Gastrocnemius medialis (tissue), 4 donors: ENCODE measurements at regions of chr2 and their contacts with region 1.

Region 1: DNA sequence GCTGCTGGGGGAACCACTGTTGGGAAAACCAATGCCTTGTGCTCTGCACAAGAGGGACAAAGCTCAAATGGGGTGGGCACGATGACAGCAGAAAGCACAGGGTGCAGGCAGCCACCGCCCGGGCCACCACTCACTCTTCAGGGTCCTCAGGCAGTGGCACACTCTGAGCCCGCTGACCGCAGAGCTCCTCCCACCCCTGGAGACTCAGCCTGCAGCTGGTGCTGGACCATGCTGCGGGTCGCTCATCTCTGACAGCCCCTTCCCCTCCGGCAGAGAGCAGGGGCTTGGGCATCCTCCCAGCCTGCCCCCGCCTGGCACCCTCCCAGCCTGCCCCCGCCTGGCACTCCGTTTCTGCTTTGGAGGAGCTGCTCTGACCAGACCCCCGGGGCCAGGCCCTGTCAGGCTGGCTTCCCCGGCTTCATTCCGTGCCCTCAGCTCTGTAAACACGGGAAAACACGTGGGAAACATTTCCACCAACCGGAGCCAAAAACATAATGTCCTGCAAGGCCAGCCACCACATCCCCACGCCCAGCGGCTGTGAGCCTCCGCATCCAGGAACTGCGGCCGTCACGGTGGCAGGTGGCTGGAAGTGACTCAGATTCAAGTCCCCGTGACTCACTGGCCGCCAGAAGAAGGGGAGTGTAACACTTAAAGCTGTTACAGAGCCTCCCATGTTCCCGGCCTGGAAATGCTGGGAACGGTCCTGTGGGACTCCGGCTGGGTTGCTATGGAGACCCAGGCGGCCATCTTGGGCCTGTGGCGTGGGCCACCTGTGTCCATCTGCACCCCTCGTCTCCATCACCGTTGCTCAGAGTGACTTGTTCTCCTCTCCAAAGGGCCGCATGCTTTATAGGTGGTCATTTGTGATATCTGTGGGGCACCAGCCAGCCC is 6.8 kb upstream of the SNED1 start:
- DNase-seq: peak; percentile 97 to 98
- ATAC-seq: peak; percentile 88 to 89
- H3K4me3 ChIP-seq: peak overlapping the region; percentile 27 to 39 (median 34)
- H3K27ac ChIP-seq: peak overlapping the region; percentile 92 to 98 (median 95)
- H3K4me1 ChIP-seq: peaks cover 52 to 55% of the 10 kb centered on the region in 2 donors
- H3K27me3 ChIP-seq: no peaks in the 10 kb centered on the region
- CTCF ChIP-seq: no peak
- POLR2A ChIP-seq: peak; percentile 24 to 67

Region 2: DNA sequence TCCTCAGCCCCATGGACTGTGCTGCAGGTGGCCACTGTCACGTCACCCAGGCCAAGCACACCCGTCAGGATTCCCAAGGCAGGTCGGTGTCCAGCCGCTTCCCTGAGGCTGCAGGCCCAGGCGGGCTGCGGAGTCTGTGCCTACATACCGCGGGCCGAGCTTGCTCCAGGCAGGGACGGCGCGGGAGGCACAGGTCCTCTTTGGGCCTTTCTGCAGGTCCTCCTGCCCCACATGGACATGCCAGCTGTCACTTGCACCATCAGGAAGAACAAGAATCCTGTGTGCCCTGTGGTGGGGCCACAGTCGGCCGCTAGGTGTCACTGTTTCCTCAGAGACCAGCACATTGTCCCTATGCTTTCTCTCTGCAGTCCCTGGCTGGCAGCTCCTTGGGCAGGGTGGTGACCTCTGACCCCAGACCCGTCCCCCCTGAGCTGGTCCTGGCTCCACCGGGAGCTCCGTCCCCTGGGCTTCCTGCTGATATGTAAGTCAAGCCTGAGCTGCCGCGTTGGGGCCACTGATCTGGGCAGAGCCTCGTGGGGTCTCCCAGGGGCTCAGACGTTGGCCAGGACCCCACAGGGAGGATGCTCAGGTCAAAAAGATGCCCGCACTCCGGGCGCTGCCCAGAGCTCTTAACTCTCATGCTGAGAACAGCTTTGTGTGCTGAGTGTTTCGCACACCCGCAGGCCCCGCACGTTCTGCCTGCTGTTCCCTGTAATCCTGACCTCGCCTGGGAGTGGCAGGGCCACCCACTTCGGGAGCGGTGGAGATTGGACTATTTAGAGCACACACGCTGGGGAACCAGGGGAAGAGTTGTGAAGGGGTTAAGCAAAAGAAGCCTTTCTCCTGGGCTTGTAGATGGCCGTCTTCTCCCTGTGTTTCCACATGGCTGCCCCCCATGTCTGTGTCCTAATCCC is 140.3 kb before region 1 on chr2:
- in situ Hi-C with region 1: no loop called
- intact Hi-C with region 1: loop called (anchors 1 kb)
- DNase-seq: peak; percentile 56 to 80
- ATAC-seq: peak; percentile 93 to 99
- H3K4me3 ChIP-seq: no peak overlapping the region
- H3K27ac ChIP-seq: no peak overlapping the region
- H3K4me1 ChIP-seq: no peaks in the 10 kb centered on the region
- H3K27me3 ChIP-seq: no peaks in the 10 kb centered on the region
- CTCF ChIP-seq: peak; percentile 77 to 96 (median 93)
- POLR2A ChIP-seq: no peak

Region 3: GRCh38 chr2:240913810-240914644 is 77.6 kb before region 1 on chr2:
- in situ Hi-C with region 1: no loop called
- intact Hi-C with region 1: loop called (anchors 5 kb)
- DNase-seq: peak in 1 of 2 donors; percentile 39
- ATAC-seq: peak; percentile 31 to 59
- H3K4me3 ChIP-seq: peak overlapping the region in 1 of 4 donors; percentile 5
- H3K27ac ChIP-seq: no peak overlapping the region
- H3K4me1 ChIP-seq: peaks cover 3 to 6% of the 10 kb centered on the region in 2 donors
- H3K27me3 ChIP-seq: peaks cover 5 to 13% (median 8%) of the 10 kb centered on the region in 3 donors
- CTCF ChIP-seq: peak; percentile 63 to 92 (median 88)
- POLR2A ChIP-seq: no peak

Region 4: DNA sequence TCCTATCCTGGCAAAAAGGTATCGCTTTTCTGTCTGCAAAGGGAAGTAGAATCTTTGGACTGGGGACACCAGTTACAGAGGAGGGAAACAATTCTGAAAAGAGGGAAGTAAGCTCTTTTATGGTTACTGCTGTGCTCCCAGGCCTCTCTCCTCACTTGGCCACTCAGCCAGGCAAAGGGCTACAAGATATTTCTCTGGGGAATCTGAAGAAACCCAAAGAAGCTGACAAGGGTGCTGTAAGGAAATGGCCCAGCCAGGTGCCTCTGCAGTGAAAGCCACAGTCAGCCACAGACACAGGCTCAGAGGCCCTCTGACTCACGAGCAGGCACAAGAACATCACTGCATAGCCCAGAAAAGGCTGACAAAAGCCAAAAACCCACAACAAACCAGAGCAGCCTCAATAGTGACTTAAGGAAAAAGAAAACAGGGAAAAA is 318.1 kb after region 1 on chr2:
- in situ Hi-C with region 1: no loop called
- intact Hi-C with region 1: loop called (anchors 5 kb)
- DNase-seq: no peak
- ATAC-seq: no peak
- H3K4me3 ChIP-seq: no peak overlapping the region
- H3K27ac ChIP-seq: peak overlapping the region in 1 of 4 donors; percentile 19
- H3K4me1 ChIP-seq: peaks cover 53 to 69% of the 10 kb centered on the region in 2 donors
- H3K27me3 ChIP-seq: no peaks in the 10 kb centered on the region
- CTCF ChIP-seq: no peak
- POLR2A ChIP-seq: no peak